H1 (cell line): ENCODE measurements at regions of chr11 and their contacts with region 1.

Region 1: DNA sequence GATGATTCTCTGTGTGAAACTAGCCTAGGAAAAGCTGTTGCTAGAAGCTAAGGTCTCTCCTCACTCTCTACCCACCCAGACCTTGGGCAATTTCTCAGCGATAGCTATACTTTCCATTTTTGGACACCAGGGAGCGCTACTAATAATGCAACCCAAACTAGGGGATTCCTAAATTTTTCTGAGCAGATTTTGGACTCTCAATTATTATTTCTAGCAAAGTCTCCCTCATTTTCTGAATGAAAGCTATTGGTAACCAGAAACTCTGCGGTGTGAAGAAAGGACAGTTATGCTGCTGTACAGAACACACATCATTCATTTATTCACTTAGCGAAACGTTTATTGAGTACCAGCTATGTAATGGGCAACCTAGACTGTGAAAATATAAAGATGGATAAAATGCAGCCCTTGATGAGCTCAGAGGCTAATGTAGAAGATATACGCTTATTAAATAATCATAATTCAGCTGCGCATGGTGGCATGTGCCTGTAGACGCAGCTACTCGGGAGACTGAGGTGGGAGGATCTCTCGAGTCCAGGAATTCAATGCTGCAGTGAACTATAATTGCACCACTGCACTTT is 6.1 kb upstream of the STIM1 start:
- DNase-seq: no peak
- H3K4me3 ChIP-seq: no peak overlapping the region
- H3K27ac ChIP-seq: no peak overlapping the region
- H3K4me1 ChIP-seq: peaks cover 3 to 7% (median 5%) of the 10 kb centered on the region in 4 experiments; a peak in 6 of 7 replicates
- H3K27me3 ChIP-seq: no peaks in the 10 kb centered on the region
- CTCF ChIP-seq: peak in 2 of 3 experiments; percentile 58 to 63; a peak in 3 of 4 replicates
- EP300 ChIP-seq: no peak
- POLR2A ChIP-seq: no peak
- RAD21 ChIP-seq: peak; percentile 44 to 54; a peak in 3 of 4 replicates

Region 2: DNA sequence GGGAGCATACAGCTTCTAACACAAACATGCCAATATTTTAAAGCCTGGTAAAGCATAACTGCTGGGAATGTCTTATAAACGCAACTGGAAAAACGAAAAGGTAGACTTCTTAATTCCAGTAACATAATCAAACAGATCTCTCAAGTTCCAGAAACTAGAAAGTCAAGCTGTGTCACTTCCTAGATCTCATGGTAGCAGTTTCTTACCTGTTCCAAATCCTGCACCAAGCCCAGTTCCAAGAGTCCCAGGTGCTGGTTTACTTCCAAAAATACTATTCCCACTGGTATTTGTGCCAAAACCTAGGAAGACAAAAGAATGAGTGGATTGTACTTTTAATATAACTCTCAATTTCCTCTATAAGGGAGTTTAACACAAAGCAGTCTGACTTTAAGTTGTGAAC is 96.3 kb before region 1 on chr11:
- CTCF ChIA-PET with region 1: no interaction called
- POLR2A ChIA-PET with region 1: no interaction called
- DNase-seq: no peak
- H3K4me3 ChIP-seq: no peak overlapping the region
- H3K27ac ChIP-seq: no peak overlapping the region
- H3K4me1 ChIP-seq: no peaks in the 10 kb centered on the region
- H3K27me3 ChIP-seq: no peaks in the 10 kb centered on the region
- CTCF ChIP-seq: no peak
- EP300 ChIP-seq: no peak
- POLR2A ChIP-seq: no peak
- RAD21 ChIP-seq: no peak

Region 3: DNA sequence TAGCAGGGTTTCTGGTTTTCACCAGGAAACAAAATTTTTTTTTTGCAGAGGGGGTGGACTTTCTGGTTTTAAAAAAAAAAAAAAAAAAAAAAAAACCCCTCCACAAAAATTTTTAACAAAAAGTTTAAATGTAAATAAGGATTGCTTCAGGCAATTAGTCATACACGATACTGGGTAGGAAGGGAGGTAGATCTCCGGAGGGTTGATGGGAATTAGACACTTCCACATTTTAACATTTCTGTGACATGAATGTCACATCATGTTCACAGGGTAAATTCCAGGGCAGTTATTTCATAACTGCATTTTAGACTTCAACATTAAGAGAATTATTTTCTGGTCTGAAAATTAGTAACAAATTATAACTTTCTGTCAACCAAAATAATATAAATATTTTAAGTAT is 68.0 kb before region 1 on chr11:
- CTCF ChIA-PET with region 1: no interaction called
- POLR2A ChIA-PET with region 1: no interaction called
- DNase-seq: no peak
- H3K4me3 ChIP-seq: no peak overlapping the region
- H3K27ac ChIP-seq: no peak overlapping the region
- H3K4me1 ChIP-seq: no peaks in the 10 kb centered on the region
- H3K27me3 ChIP-seq: no peaks in the 10 kb centered on the region
- CTCF ChIP-seq: no peak
- EP300 ChIP-seq: no peak
- POLR2A ChIP-seq: no peak
- RAD21 ChIP-seq: no peak

Region 4: DNA sequence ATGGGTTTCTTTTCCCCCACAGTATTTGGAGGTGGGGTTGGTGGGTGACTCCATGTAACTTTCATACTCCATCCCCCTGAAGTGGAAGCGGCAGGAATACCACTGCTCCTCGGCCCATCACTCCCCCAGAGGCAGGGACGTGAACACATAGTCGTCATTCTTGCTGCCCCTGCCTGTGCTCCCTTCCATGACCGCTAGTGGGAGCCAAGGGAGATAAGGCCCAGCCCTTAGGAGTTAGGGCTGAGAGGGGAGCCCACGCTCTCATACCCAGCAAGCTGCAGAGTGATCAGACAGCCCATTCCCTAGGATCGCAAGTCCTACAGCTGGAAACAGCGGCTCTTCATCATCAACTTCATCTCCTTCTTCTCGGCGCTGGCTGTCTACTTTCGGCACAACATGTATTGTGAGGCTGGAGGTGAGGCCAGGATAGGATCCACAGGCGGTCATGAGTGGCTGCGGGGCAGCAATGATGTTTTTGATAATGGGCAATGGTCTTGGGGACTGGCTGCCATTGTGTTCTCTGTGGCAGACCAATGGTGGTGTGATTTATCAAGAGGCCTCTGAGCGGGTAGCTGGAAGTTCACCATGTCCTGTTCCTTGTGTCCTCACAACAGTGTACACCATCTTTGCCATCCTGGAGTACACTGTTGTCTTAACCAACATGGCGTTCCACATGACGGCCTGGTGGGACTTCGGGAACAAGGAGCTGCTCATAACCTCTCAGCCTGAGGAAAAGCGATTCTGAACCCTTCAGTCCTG is 24.5 kb before region 1 on chr11:
- CTCF ChIA-PET with region 1: interaction called, 214 read pairs
- POLR2A ChIA-PET with region 1: interaction called, 6 read pairs
- DNase-seq: peak; percentile 75 to 96
- H3K4me3 ChIP-seq: no peak overlapping the region
- H3K27ac ChIP-seq: peak overlapping the region; percentile 22; the same call in 1 of the 2 replicates
- H3K4me1 ChIP-seq: peaks cover 22 to 32% (median 24%) of the 10 kb centered on the region in 4 experiments
- H3K27me3 ChIP-seq: no peaks in the 10 kb centered on the region
- CTCF ChIP-seq: peak; percentile 99 to 100 (median 100)
- EP300 ChIP-seq: no peak
- POLR2A ChIP-seq: peak; percentile 48 to 60
- RAD21 ChIP-seq: peak; percentile 77 to 80

Region 5: GRCh38 chr11:3877364-3878257 is 28.2 kb after region 1 on chr11:
- CTCF ChIA-PET with region 1: interaction called, 73 read pairs
- POLR2A ChIA-PET with region 1: no interaction called
- DNase-seq: no peak
- H3K4me3 ChIP-seq: no peak overlapping the region
- H3K27ac ChIP-seq: no peak overlapping the region
- H3K4me1 ChIP-seq: peaks cover 0 to 4% (median 2%) of the 10 kb centered on the region in 4 experiments; a peak in 3 of 7 replicates
- H3K27me3 ChIP-seq: no peaks in the 10 kb centered on the region; a peak in 3 of 7 replicates
- CTCF ChIP-seq: no peak
- EP300 ChIP-seq: no peak
- POLR2A ChIP-seq: no peak
- RAD21 ChIP-seq: no peak

Region 6: DNA sequence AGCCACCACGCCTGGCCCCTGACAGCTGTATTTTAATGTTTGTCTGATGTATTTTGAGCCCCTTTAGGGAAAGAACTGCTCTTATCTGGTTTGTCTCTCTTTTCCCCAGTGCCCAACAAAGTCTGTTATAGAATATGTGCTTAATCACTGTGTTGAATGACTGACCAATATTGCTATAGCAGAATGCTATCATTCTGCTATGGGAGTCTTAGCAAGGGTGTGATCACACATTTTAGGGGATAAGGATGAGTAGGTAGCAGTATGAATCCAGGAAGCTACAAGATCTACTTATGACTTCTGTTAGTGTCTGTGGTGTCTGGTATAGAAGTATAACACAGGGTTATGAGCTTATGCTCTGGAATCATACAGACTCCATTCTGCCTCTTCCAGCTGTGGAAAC is 127.7 kb after region 1 on chr11:
- CTCF ChIA-PET with region 1: interaction called, 16 read pairs
- POLR2A ChIA-PET with region 1: no interaction called
- DNase-seq: no peak
- H3K4me3 ChIP-seq: no peak overlapping the region
- H3K27ac ChIP-seq: no peak overlapping the region
- H3K4me1 ChIP-seq: no peaks in the 10 kb centered on the region
- H3K27me3 ChIP-seq: no peaks in the 10 kb centered on the region
- CTCF ChIP-seq: no peak
- EP300 ChIP-seq: no peak
- POLR2A ChIP-seq: no peak
- RAD21 ChIP-seq: no peak

Region 7: GRCh38 chr11:4017129-4017528 is 167.7 kb after region 1 on chr11:
- CTCF ChIA-PET with region 1: interaction called, 14 read pairs
- POLR2A ChIA-PET with region 1: no interaction called
- DNase-seq: no peak
- H3K4me3 ChIP-seq: no peak overlapping the region
- H3K27ac ChIP-seq: no peak overlapping the region
- H3K4me1 ChIP-seq: peaks cover 0 to 3% (median 0%) of the 10 kb centered on the region in 4 experiments; a peak in 1 of 7 replicates
- H3K27me3 ChIP-seq: no peaks in the 10 kb centered on the region
- CTCF ChIP-seq: no peak
- EP300 ChIP-seq: no peak
- POLR2A ChIP-seq: no peak
- RAD21 ChIP-seq: no peak